ENCODE measurements at regions of chr7 and their contacts with region 1.

Region 1: GRCh38 chr7:155009570-155010157 is 6.7 kb upstream of the PAXIP1 start:
- DNase-seq: peak; percentile 44
- H3K4me3 Mint-ChIP-seq: no peak overlapping the region
- H3K27ac Mint-ChIP-seq: no peak overlapping the region
- H3K4me1 Mint-ChIP-seq: peaks cover 8% of the 10 kb centered on the region
- H3K27me3 Mint-ChIP-seq: no peaks in the 10 kb centered on the region
- CTCF ChIP-seq: peak; percentile 66

Region 2: GRCh38 chr7:154996752-154997151 is 12.9 kb before region 1 on chr7:
- CTCF ChIA-PET with region 1: no interaction called
- intact Hi-C with region 1: loop called (anchors 1 kb)
- DNase-seq: no peak
- H3K4me3 Mint-ChIP-seq: no peak overlapping the region
- H3K27ac Mint-ChIP-seq: no peak overlapping the region
- H3K4me1 Mint-ChIP-seq: no peaks in the 10 kb centered on the region
- H3K27me3 Mint-ChIP-seq: no peaks in the 10 kb centered on the region
- CTCF ChIP-seq: no peak

Region 3: GRCh38 chr7:155178096-155178495 is 168.4 kb after region 1 on chr7:
- CTCF ChIA-PET with region 1: no interaction called
- intact Hi-C with region 1: no loop called
- DNase-seq: no peak
- H3K4me3 Mint-ChIP-seq: no peak overlapping the region
- H3K27ac Mint-ChIP-seq: no peak overlapping the region
- H3K4me1 Mint-ChIP-seq: no peaks in the 10 kb centered on the region
- H3K27me3 Mint-ChIP-seq: peaks cover 13% of the 10 kb centered on the region
- CTCF ChIP-seq: no peak